Ascending aorta (tissue), 2 donors: ENCODE measurements at regions of chr10 and their contacts with region 1.

Region 1: DNA sequence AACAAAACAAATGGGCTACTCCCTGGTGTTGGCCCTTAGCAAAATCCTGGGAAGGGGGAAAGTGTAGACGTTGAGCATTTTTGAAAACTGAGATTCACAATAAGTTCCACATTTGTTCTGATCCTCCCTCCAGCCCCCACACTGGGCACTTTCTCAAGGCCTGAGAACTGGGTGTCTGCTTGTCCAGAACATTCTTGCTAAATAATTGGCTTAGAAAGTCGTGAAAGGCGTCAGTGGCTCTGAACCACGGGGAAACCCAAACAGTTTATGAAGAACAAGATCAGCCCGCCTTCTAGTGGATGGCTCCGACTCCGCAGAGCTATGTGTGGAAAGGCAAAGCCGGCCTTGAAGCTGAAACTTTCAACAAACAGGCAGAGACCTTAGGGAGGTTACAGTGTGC is 370.1 kb downstream of the PRPF18 start:
- DNase-seq: peak; percentile 41 to 91
- H3K4me3 ChIP-seq: no peak overlapping the region
- H3K27ac ChIP-seq: peak overlapping the region; percentile 58 to 69
- H3K4me1 ChIP-seq: peaks cover 0 to 13% of the 10 kb centered on the region in 2 donors
- H3K27me3 ChIP-seq: no peaks in the 10 kb centered on the region
- CTCF ChIP-seq: peak; percentile 41 to 72 (median 56)

Region 2: DNA sequence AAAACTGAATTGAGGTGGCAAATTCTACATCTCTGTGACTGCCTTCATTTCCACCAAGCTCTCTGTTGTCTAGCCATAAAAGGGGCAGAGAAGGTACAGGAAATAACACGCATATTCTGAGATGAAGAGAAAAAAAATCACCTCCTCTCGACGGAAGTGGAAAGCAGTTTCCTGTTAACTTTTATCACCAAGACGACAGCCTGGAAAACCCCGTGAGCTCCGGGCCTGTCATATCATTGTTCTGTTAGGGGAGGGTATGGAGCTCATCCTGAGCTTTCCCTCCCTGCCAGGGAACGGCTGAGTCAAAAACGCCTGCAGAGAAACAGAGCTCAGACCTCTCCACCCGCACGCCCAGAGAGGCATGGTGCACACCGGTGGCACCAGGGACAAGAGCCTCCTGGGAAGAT is 169.8 kb before region 1 on chr10:
- intact Hi-C with region 1: loop called (anchors 2 kb)
- DNase-seq: peak in 1 of 2 donors; percentile 66
- H3K4me3 ChIP-seq: no peak overlapping the region
- H3K27ac ChIP-seq: peak overlapping the region in 1 of 2 donors; percentile 8
- H3K4me1 ChIP-seq: peaks cover 6 to 14% of the 10 kb centered on the region in 2 donors
- H3K27me3 ChIP-seq: no peaks in the 10 kb centered on the region
- CTCF ChIP-seq: no peak

Region 3: GRCh38 chr10:13839430-13839990 is 117.3 kb before region 1 on chr10:
- intact Hi-C with region 1: loop called (anchors 5 kb)
- DNase-seq: peak in 1 of 2 donors; percentile 72
- H3K4me3 ChIP-seq: no peak overlapping the region
- H3K27ac ChIP-seq: peak overlapping the region; percentile 59 to 61
- H3K4me1 ChIP-seq: peaks cover 8 to 24% of the 10 kb centered on the region in 2 donors
- H3K27me3 ChIP-seq: no peaks in the 10 kb centered on the region
- CTCF ChIP-seq: no peak

Region 4: DNA sequence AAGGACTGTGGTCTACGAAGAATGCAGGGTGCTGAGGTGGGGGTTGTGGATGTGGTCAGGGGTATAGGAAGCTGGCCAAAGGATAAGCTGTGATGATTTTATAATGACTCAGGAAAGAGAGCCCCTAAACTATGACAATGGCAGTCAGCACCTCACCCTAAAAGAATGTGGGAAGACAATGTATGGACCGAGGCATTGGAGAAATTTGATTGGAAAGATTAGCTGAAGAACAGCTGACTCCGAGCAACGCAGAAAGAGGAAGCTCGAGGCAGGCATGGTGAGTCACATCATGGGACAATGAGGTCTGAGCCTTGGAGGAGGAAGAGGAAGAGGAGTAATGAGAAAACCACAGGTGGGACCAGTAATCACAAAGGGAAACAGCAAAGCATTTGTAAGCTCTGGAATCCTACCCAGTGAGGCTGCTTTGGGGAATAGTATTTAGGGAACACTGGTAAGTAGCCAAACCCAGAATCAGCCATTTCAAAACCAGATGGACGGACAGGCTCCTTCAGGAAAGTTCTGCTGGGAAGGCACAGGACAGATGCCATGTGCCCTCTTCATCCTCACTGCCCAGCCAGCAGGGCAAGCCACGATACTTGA is 74.6 kb before region 1 on chr10:
- intact Hi-C with region 1: loop called (anchors 5 kb)
- DNase-seq: no peak
- H3K4me3 ChIP-seq: no peak overlapping the region
- H3K27ac ChIP-seq: peak overlapping the region; percentile 49 to 67
- H3K4me1 ChIP-seq: peaks cover 3 to 26% of the 10 kb centered on the region in 2 donors
- H3K27me3 ChIP-seq: no peaks in the 10 kb centered on the region
- CTCF ChIP-seq: no peak

Region 5: DNA sequence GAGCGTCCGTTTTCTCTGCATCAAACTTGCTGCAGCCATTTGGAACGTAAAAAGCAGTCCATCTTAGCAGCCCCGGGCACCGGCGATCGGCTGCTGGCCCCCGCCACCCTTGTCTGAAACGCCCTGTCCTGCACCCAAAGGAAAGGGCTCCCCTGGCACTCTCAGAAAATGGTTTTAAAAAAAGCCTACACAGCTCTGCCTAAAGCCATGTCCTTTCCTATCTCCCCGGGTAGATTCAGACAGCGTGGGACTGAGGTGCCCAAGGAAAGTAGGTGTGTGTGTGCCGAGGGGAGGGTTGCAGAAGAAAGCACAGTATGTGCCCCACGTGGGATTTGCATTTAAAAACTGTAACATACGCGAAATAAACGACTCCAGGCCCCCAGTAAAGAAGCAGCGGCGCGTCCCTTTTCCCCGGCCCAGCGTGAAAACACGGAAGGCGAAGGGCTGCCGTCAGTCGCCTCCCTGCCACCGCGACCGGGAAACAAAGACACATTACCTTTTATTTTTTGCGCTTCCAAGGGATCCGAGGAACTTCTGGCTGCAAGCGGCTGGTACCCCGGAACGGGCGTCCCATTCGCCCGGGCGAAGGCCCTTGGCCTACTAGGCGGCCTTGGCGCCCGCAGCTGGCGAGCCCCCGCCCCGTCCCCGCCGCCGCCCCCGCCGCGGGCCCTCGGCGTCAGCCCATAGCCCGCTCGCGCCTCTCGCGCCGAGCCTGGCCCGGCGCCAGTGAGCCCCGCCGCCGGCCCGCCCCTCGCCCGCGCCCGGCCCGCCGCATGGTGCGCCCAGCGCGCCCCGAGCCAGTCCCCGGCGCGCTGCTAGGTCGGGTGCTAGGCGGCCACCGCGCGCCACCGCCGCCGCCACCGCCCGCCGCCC is 65.5 kb before region 1 on chr10:
- intact Hi-C with region 1: loop called (anchors 5 kb)
- DNase-seq: peak in 1 of 2 donors; percentile 70
- H3K4me3 ChIP-seq: peak overlapping the region; percentile 64 to 79
- H3K27ac ChIP-seq: peak overlapping the region; percentile 66 to 83
- H3K4me1 ChIP-seq: peaks cover 0 to 12% of the 10 kb centered on the region in 2 donors
- H3K27me3 ChIP-seq: no peaks in the 10 kb centered on the region
- CTCF ChIP-seq: no peak

Region 6: GRCh38 chr10:13913897-13914296 is 42.9 kb before region 1 on chr10:
- intact Hi-C with region 1: no loop called
- DNase-seq: peak in 1 of 2 donors; percentile 61
- H3K4me3 ChIP-seq: no peak overlapping the region
- H3K27ac ChIP-seq: no peak overlapping the region
- H3K4me1 ChIP-seq: no peaks in the 10 kb centered on the region
- H3K27me3 ChIP-seq: no peaks in the 10 kb centered on the region
- CTCF ChIP-seq: no peak

Region 7: GRCh38 chr10:13924040-13924725 is 32.6 kb before region 1 on chr10:
- intact Hi-C with region 1: loop called (anchors 5 kb)
- DNase-seq: peak in 1 of 2 donors; percentile 71
- H3K4me3 ChIP-seq: no peak overlapping the region
- H3K27ac ChIP-seq: peak overlapping the region; percentile 57 to 65
- H3K4me1 ChIP-seq: peaks cover 0 to 16% of the 10 kb centered on the region in 2 donors
- H3K27me3 ChIP-seq: no peaks in the 10 kb centered on the region
- CTCF ChIP-seq: no peak

Region 8: GRCh38 chr10:14032395-14032998 is 75.7 kb after region 1 on chr10:
- intact Hi-C with region 1: no loop called
- DNase-seq: no peak
- H3K4me3 ChIP-seq: no peak overlapping the region
- H3K27ac ChIP-seq: no peak overlapping the region
- H3K4me1 ChIP-seq: no peaks in the 10 kb centered on the region
- H3K27me3 ChIP-seq: no peaks in the 10 kb centered on the region
- CTCF ChIP-seq: peak in 2 of 3 experiments; percentile 36 to 43